Calu3 (cell line): ENCODE measurements at regions of chr1 and their contacts with region 1.

Region 1: DNA sequence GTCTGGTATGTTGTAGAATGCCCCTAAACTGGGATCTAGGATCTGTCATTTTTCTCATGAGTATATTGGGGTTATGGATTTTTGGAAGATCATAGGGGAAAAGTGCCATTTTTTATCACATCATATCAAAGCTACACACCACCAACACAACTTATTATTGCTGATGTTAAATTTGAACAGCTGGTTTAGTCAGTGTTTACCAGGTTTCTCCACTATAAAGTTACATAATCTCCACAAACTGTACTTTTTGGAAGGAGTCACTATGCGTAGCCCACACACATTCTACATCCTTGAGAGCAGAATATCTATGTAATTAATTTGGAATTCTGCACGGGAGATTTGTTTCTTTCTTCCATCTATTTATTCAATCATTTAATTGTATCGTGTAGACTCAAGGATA is 35.2 kb downstream of the RC3H1 start:
- DNase-seq: no peak
- H3K4me3 Mint-ChIP-seq: no peak overlapping the region
- H3K27ac Mint-ChIP-seq: no peak overlapping the region
- H3K4me1 Mint-ChIP-seq: no peaks in the 10 kb centered on the region
- H3K27me3 Mint-ChIP-seq: no peaks in the 10 kb centered on the region
- CTCF ChIP-seq: no peak

Region 2: GRCh38 chr1:173970252-173970651 is 16.7 kb before region 1 on chr1:
- CTCF ChIA-PET with region 1: no interaction called
- intact Hi-C with region 1: loop called (anchors 1 kb)
- DNase-seq: no peak
- H3K4me3 Mint-ChIP-seq: no peak overlapping the region
- H3K27ac Mint-ChIP-seq: no peak overlapping the region
- H3K4me1 Mint-ChIP-seq: no peaks in the 10 kb centered on the region
- H3K27me3 Mint-ChIP-seq: no peaks in the 10 kb centered on the region
- CTCF ChIP-seq: no peak